H1 (cell line): ENCODE measurements at regions of chr19 and their contacts with region 1.

Region 1: GRCh38 chr19:8044018-8044417 is 8.5 kb upstream of the CCL25 start:
- DNase-seq: no peak
- H3K4me3 ChIP-seq: no peak overlapping the region
- H3K27ac ChIP-seq: no peak overlapping the region
- H3K4me1 ChIP-seq: no peaks in the 10 kb centered on the region
- H3K27me3 ChIP-seq: peaks cover 0 to 3% (median under 1%) of the 10 kb centered on the region in 4 experiments; a peak in 3 of 7 replicates
- CTCF ChIP-seq: no peak
- EP300 ChIP-seq: no peak
- POLR2A ChIP-seq: no peak
- RAD21 ChIP-seq: no peak

Region 2: DNA sequence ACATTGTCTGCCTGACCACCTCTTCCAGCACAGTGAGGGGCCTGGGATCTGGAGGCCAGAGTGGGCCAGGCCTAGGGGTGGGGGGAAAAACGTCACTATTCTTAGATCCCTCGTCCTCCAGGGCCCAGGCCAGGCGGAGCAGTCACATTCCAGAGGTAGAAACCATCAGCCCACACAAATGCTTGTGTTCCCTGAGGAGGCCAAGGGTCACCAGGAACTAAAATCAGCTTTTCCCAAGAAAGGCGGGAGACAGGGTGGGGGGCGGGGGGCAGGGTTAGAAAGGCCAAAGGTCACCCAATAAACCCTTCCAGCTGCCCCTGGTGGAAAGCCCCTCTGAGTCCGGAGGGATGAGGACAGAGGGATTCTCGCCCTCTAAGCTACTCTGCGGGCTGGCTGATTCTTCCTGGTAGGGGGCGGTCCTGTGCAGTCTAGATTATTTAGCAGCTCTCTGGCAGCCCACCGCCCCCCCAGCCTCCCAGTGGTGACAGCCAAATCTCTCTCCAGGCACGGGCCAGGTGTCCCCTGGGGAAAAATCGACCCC is 15.0 kb before region 1 on chr19:
- CTCF ChIA-PET with region 1: interaction called, 13 read pairs
- POLR2A ChIA-PET with region 1: interaction called, 7 read pairs
- DNase-seq: peak in 1 of 2 experiments; percentile 65
- H3K4me3 ChIP-seq: no peak overlapping the region
- H3K27ac ChIP-seq: no peak overlapping the region
- H3K4me1 ChIP-seq: peaks cover 4 to 17% (median 9%) of the 10 kb centered on the region in 4 experiments
- H3K27me3 ChIP-seq: no peaks in the 10 kb centered on the region
- CTCF ChIP-seq: peak; percentile 5 to 28 (median 9); a peak in 3 of 4 replicates
- EP300 ChIP-seq: 0 out of 3 replicates have a peak, but pooled peaks of 1 of the 2 experiments have one; percentile 47
- POLR2A ChIP-seq: no peak
- RAD21 ChIP-seq: peak in 1 of 2 experiments; percentile 37; a peak in 2 of 4 replicates

Region 3: GRCh38 chr19:8129060-8129459 is 85.0 kb after region 1 on chr19:
- CTCF ChIA-PET with region 1: no interaction called
- POLR2A ChIA-PET with region 1: no interaction called
- DNase-seq: no peak
- H3K4me3 ChIP-seq: no peak overlapping the region
- H3K27ac ChIP-seq: no peak overlapping the region
- H3K4me1 ChIP-seq: no peaks in the 10 kb centered on the region
- H3K27me3 ChIP-seq: no peaks in the 10 kb centered on the region
- CTCF ChIP-seq: no peak
- EP300 ChIP-seq: no peak
- POLR2A ChIP-seq: no peak
- RAD21 ChIP-seq: no peak

Region 4: DNA sequence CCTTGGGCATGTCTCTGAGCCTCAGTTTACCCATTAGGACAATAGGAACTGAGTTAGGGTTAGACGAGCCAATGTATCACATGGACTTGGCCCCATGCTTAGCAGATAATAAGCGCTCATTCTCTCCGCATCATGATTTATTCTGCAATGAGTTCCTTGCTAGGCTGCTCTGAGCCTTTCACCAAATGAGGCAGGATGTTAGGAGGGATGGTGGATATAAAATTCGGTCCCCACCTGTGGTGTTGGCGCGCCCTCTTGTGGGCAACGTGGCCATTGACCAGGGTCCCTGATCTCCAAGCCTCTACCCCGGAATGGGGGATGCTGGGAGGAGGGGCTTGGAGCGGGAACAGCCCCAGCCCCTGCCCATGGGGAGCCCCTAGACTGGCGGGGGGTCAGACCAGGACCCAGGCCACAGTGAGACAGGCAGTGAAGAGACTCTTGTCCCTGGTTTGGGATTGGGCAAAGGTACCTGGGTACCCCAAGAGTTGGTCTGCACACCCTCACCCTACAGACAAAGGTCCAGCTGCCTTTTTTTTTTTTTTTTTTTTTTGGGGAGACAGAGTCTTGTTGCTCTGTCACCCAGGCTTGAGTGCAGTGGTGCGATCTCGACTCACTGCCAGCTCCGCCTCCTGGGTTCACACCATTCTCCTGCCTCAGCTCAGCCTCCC is 209.0 kb after region 1 on chr19:
- CTCF ChIA-PET with region 1: no interaction called
- POLR2A ChIA-PET with region 1: no interaction called
- DNase-seq: peak; percentile 66 to 98
- H3K4me3 ChIP-seq: no peak overlapping the region
- H3K27ac ChIP-seq: no peak overlapping the region
- H3K4me1 ChIP-seq: peaks cover 0 to 2% (median 0%) of the 10 kb centered on the region in 4 experiments; a peak in 1 of 7 replicates
- H3K27me3 ChIP-seq: no peaks in the 10 kb centered on the region
- CTCF ChIP-seq: peak; percentile 95 to 98 (median 97)
- EP300 ChIP-seq: peak in 1 of 2 experiments; percentile 12; a peak in 1 of 3 replicates
- POLR2A ChIP-seq: no peak
- RAD21 ChIP-seq: peak; percentile 99 to 100